ENCODE measurements at regions of chr7 and their contacts with region 1.

Region 1: DNA sequence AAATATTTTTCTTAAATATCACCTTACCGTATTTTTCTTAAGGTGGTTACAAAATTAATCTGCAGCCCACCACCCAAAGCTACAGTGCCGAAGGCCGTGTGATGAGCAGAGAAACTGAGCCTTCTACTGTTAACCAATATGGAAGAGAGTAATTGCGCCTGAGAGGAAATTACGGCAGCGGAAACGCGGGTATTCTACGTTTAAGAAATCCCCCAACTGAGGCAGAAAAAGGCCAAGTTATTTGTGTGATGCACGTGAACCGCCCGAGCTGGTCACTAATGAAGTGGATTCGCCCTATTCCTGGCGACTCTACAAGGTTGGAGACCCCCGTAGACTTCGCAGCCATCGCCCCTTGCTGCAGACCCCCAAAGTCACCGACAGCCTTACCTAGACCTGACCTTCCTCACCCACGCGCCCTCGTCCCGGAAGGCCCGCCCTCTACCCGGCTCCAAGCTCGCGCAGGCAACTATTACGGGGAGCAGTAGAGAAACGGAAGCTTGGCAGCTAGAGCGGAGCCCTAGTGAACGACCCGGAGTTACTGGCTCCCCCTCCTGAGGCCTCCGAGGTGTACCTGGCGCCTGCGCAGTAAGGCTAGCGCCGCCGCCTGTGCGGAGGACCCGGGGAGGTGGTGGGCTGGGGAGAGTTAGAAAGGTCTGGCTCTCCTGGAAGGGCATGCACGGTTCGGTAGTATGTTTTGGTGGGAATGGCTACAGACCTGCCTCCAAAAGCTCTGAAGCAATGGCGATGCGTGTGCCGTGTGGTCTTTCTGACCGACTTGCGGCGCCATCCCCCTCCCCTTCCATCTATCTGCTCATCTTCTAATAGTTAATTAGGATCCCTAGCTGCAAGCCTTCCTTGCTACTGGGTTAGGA is at the start of gene MRPS33:
- DNase-seq: peak; percentile 95
- H3K4me3 Mint-ChIP-seq: peak within 1 kb of the TSS; percentile 85
- H3K27ac Mint-ChIP-seq: peak within 1 kb of the TSS; percentile 97
- H3K4me1 Mint-ChIP-seq: peaks cover 16% of the 10 kb centered on the region
- H3K27me3 Mint-ChIP-seq: peaks cover 20% of the 10 kb centered on the region
- CTCF ChIP-seq: peak; percentile 37
- total RNA-seq, gene MRPS33: 49.7 and 58.6 TPM in 2 replicates

Region 2: DNA sequence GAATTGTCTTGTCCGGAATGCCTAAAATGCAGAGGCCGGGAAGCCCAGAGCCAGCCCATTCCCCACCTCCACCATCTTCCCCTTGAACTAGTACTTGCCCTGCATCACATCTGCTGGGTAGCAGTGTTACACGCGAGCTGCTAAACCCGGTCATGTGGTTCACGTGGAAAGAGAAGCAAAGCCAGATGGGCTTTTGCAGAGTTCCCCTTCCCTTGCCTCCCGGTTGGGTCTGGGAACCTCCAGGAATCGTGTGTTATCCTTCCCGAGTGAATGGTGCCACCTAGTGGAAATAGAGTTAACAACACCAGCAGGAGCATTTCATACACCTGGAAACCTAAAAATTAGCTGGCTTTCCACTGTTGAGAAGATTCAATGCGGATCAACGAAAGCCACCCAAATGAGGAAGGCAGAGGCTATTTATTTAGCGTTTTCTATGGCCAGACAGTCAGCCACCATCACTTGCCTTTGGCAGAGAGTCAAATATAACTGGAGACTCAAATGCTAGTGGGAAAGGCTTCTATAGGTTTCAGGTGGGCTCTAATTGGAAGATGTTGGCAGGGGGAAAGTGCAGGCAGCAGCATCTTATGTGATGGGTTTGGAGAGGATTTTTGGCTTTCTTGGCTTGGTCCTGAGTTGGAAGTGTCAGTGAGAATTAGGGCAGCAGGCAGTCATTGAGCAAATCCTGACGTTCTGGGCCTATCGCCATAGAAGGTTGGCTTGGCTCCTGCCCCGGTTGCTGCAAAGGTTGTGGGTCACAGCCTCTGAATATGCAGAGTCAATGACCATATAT is 361.2 kb before region 1 on chr7:
- CTCF ChIA-PET with region 1: no interaction called
- POLR2A ChIA-PET with region 1: no interaction called
- intact Hi-C with region 1: loop called (anchors 1 kb)
- DNase-seq: peak; percentile 84
- H3K4me3 Mint-ChIP-seq: no peak overlapping the region
- H3K27ac Mint-ChIP-seq: no peak overlapping the region
- H3K4me1 Mint-ChIP-seq: peaks cover 42% of the 10 kb centered on the region
- H3K27me3 Mint-ChIP-seq: no peaks in the 10 kb centered on the region
- CTCF ChIP-seq: peak; percentile 88

Region 3: DNA sequence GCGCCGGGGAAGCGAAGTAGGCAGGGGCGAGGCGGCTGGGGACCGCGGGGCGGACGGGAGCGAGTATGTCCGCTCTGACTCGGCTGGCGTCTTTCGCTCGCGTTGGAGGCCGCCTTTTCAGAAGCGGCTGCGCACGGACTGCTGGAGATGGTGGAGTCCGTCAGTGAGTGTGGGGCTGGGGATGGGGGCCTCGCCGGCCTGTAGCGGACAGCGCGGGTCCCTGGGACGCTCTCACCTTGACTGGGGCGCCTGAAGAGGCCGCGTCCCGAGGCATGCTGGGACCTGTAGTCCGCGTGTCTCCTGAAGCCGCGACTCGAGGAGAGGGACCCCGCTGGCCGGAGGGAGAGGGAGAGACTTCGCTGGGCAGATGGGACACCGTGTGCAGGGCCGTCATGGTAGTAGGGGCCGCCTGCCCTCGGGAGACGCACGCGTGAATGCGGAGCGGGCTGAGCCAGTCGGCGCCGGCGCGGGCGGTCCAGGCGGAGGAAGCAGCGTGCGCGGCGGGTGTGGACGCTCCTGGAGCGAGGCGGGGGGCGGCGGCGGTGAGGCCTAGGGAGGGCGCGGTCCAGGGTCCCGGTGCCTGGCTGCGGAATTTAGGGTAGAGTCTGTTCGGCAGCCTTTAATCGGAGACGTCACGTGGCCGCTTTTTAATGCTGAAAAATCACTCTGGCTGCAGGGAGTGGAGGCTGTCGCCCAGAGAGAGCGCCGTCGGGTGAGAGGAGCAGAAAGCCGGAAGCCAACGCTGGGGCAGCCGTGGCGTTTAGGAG is 317.9 kb before region 1 on chr7 and contains the start of gene NDUFB2:
- CTCF ChIA-PET with region 1: no interaction called
- POLR2A ChIA-PET with region 1: interaction called, 4 read pairs
- intact Hi-C with region 1: loop called (anchors 2 kb)
- DNase-seq: peak; percentile 83
- H3K4me3 Mint-ChIP-seq: peak within 1 kb of the TSS; percentile 86
- H3K27ac Mint-ChIP-seq: peak within 1 kb of the TSS; percentile 94
- H3K4me1 Mint-ChIP-seq: peaks cover 20% of the 10 kb centered on the region
- H3K27me3 Mint-ChIP-seq: no peaks in the 10 kb centered on the region
- CTCF ChIP-seq: no peak
- total RNA-seq, gene NDUFB2: 166 and 189 TPM in 2 replicates

Region 4: DNA sequence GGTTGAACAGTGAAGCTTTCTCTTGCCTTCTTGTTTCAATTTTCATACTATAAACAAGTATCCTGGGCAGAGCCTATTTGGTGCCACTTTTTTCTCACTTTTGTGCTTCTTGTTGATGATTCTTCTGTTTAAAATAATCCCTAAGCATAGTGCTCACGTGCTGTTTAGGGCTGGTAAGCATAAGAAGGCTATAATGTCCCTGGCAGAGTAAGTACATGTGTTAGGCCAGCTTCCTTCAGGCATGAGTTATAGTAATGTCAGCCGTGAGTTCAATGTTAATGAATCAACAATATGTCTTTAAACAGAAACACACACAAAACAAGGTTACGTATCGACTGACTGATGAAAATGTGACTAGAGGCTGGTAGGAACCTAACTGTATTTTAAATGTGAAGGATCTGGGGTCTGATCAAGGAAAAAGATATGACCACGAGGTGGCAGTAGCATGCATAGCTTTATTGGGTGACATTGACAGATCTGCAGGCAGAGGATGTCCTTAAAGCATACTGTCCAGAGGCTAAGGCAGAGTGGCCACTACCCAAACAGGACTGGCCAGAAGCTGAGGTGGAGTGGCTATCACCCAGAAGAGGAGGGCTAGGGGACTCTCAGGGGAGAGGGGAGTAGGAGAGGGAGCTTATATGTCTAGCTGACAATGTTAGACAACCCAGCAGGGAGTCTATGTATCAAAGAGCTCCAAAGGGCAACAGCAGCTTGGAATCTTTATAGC is 203.8 kb before region 1 on chr7:
- CTCF ChIA-PET with region 1: interaction called, 145 read pairs
- POLR2A ChIA-PET with region 1: interaction called, 22 read pairs
- intact Hi-C with region 1: loop called (anchors 1 kb)
- DNase-seq: peak; percentile 77
- H3K4me3 Mint-ChIP-seq: no peak overlapping the region
- H3K27ac Mint-ChIP-seq: no peak overlapping the region
- H3K4me1 Mint-ChIP-seq: peaks cover 6% of the 10 kb centered on the region
- H3K27me3 Mint-ChIP-seq: no peaks in the 10 kb centered on the region
- CTCF ChIP-seq: peak; percentile 79

Region 5: DNA sequence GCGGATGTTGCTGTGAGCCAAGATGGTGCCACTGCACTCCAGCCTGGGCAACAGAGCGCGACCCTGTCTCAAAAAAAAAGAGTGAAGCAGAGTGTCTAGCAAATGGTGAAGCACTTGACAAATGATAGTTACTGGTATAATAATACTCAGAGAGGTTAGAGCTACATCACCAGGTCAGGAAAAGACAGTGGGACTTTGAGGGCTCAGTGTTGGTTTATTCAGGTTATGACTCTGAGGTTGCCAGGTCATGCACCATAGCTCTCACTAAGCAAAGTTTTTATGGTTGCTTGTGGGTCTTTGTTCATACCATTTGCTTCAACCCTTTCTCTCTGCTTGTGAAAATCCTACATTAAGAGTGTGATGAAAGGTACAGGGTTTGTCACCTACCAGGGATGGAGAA is 13.6 kb before region 1 on chr7:
- CTCF ChIA-PET with region 1: interaction called, 17 read pairs
- POLR2A ChIA-PET with region 1: interaction called, 5 read pairs
- intact Hi-C with region 1: no loop called
- DNase-seq: no peak
- H3K4me3 Mint-ChIP-seq: no peak overlapping the region
- H3K27ac Mint-ChIP-seq: no peak overlapping the region
- H3K4me1 Mint-ChIP-seq: no peaks in the 10 kb centered on the region
- H3K27me3 Mint-ChIP-seq: no peaks in the 10 kb centered on the region
- CTCF ChIP-seq: no peak

Region 6: GRCh38 chr7:141144921-141145629 is 130.3 kb after region 1 on chr7:
- CTCF ChIA-PET with region 1: no interaction called
- POLR2A ChIA-PET with region 1: no interaction called
- intact Hi-C with region 1: no loop called
- DNase-seq: no peak
- H3K4me3 Mint-ChIP-seq: no peak overlapping the region
- H3K27ac Mint-ChIP-seq: no peak overlapping the region
- H3K4me1 Mint-ChIP-seq: no peaks in the 10 kb centered on the region
- H3K27me3 Mint-ChIP-seq: no peaks in the 10 kb centered on the region
- CTCF ChIP-seq: no peak

Region 7: GRCh38 chr7:141533149-141533949 is 518.6 kb after region 1 on chr7:
- CTCF ChIA-PET with region 1: interaction called, 13 read pairs
- POLR2A ChIA-PET with region 1: no interaction called
- intact Hi-C with region 1: loop called (anchors 1 kb)
- DNase-seq: peak; percentile 78
- H3K4me3 Mint-ChIP-seq: no peak overlapping the region
- H3K27ac Mint-ChIP-seq: no peak overlapping the region
- H3K4me1 Mint-ChIP-seq: no peaks in the 10 kb centered on the region
- H3K27me3 Mint-ChIP-seq: peaks cover 23% of the 10 kb centered on the region
- CTCF ChIP-seq: peak; percentile 89

Region 8: GRCh38 chr7:141737834-141738591 is 723.3 kb after region 1 on chr7 and contains the start of gene SSBP1:
- CTCF ChIA-PET with region 1: no interaction called
- POLR2A ChIA-PET with region 1: interaction called, 13 read pairs
- intact Hi-C with region 1: loop called (anchors 10 kb)
- DNase-seq: peak; percentile 97
- H3K4me3 Mint-ChIP-seq: peak within 1 kb of the TSS; percentile 97
- H3K27ac Mint-ChIP-seq: peak within 1 kb of the TSS; percentile 98
- H3K4me1 Mint-ChIP-seq: peaks cover 16% of the 10 kb centered on the region
- H3K27me3 Mint-ChIP-seq: no peaks in the 10 kb centered on the region
- CTCF ChIP-seq: peak; percentile 53
- total RNA-seq, gene SSBP1: 269 and 340 TPM in 2 replicates